Left lung (tissue), 14 donors: ENCODE measurements at regions of chr20 and their contacts with region 1.

Region 1: DNA sequence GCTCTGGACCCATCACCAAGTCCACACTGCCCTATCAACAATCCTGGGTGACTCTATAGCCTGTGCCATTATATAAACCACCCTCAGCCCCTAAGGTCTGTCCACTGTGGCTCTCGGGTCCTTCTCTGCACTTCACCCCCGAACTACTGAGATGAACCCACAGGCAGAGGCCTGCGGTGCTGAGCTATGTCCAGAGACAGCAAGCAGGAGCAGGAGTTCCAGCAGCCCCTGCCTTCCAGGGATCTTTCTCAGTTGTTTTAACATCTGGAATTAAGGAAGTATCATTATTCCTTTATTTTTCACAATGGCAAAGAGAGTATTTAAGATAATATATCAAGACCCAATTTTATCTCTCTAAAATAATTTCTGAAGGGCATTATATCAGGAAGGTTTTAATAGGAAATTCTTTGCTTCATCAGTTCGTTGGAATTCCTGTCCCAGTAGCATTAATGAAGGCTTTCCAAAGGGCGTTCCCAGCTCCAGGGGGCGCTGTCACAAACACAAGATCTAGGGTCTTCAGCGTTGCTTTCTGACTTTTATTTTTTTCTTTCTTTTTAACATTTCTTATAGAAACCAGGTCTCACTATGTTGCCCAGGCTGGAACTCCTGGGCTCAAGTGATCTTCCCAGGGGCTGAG is 27.3 kb downstream of the RRBP1 start:
- DNase-seq: peak in 2 of 4 donors; percentile 29 to 56
- ATAC-seq: no peak
- H3K4me3 ChIP-seq: no peak overlapping the region
- H3K27ac ChIP-seq: no peak overlapping the region
- H3K4me1 ChIP-seq: peaks cover 23 to 33% of the 10 kb centered on the region in 2 donors
- H3K27me3 ChIP-seq: no peaks in the 10 kb centered on the region
- CTCF ChIP-seq: peak; percentile 43 to 51

Region 2: DNA sequence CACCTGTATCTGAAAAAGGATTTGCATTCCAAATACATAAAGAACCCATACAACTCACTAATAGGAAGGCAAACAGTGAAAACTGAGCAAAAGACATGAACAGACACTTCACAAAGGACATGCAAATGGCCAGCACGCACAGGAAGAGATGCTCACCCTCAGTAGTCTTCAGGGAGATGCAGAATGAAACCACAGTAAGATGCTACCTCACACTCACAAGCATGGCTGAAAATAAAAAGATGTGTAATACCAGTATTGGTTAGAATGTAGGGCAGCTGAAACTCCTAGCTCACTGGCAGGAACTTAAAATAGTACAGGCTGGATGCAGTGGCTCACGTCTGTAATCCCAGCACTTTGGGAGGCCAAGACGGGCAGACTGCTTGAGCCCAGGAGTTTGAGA is 249.3 kb after region 1 on chr20:
- intact Hi-C with region 1: loop called in 1 of 2 experiments (anchors 5 kb)
- DNase-seq: no peak
- ATAC-seq: no peak
- H3K4me3 ChIP-seq: no peak overlapping the region
- H3K27ac ChIP-seq: no peak overlapping the region
- H3K4me1 ChIP-seq: no peaks in the 10 kb centered on the region
- H3K27me3 ChIP-seq: no peaks in the 10 kb centered on the region
- CTCF ChIP-seq: no peak

Region 3: DNA sequence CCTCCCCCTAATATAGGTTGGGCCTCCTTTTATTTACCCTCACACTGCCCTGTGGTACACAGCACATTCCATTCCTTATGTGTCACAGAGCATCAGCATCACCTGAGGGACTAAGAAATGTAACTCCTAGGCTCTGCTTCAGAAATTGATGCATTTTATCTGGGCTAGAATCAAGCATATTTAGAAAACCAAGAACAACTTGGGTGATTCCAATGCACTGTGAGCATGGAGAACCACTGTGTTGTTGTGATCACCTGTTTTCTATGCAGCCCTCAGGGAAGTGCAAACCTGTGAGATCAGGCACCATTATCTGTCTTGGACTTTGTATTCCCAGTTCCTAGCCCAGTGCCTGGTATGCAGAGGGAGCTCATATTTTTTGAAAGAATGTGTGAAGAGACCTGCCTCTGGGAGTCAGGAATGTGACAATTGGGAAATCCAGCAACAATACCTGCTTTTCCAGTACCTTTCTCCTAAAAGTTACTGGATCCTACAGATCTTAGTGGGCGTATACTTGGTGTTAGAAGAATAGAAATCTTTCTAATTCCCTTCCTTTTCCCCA is 489.9 kb after region 1 on chr20:
- intact Hi-C with region 1: loop called in 1 of 2 experiments (anchors 5 kb)
- DNase-seq: no peak
- ATAC-seq: peak; percentile 16
- H3K4me3 ChIP-seq: no peak overlapping the region
- H3K27ac ChIP-seq: no peak overlapping the region
- H3K4me1 ChIP-seq: peaks cover 0 to 11% of the 10 kb centered on the region in 2 donors
- H3K27me3 ChIP-seq: no peaks in the 10 kb centered on the region
- CTCF ChIP-seq: no peak